K562 (cell line): ENCODE measurements at regions of chr13 and their contacts with region 1.

Region 1: GRCh38 chr13:42110410-42111155 is 62.1 kb downstream of the DGKH start:
- DNase-seq: peak; percentile 24 to 59 (median 25)
- ATAC-seq: peak; percentile 67
- H3K4me3 ChIP-seq: no peak overlapping the region
- H3K27ac ChIP-seq: no peak overlapping the region
- H3K4me1 ChIP-seq: peaks cover 0 to 10% of the 10 kb centered on the region in 2 experiments; a peak in 1 of 5 replicates
- H3K27me3 ChIP-seq: no peaks in the 10 kb centered on the region
- CTCF ChIP-seq: peak; percentile 41 to 71 (median 50); a peak in 5 of 6 replicates
- EP300 ChIP-seq: no peak
- POLR2A ChIP-seq: no peak
- RAD21 ChIP-seq: peak; percentile 67 to 82

Region 2: GRCh38 chr13:41178040-41178439 is 932.5 kb before region 1 on chr13:
- CTCF ChIA-PET with region 1: no interaction called
- POLR2A ChIA-PET with region 1: no interaction called
- in situ Hi-C with region 1: no loop called
- intact Hi-C with region 1: no loop called
- DNase-seq: no peak
- ATAC-seq: no peak
- H3K4me3 ChIP-seq: no peak overlapping the region
- H3K27ac ChIP-seq: no peak overlapping the region
- H3K4me1 ChIP-seq: peaks cover 0 to 4% of the 10 kb centered on the region in 2 experiments; a peak in 1 of 5 replicates
- H3K27me3 ChIP-seq: no peaks in the 10 kb centered on the region
- CTCF ChIP-seq: no peak
- EP300 ChIP-seq: no peak
- POLR2A ChIP-seq: no peak
- RAD21 ChIP-seq: no peak

Region 3: GRCh38 chr13:41383386-41383785 is 727.2 kb before region 1 on chr13:
- CTCF ChIA-PET with region 1: no interaction called
- POLR2A ChIA-PET with region 1: no interaction called
- in situ Hi-C with region 1: no loop called
- intact Hi-C with region 1: no loop called
- DNase-seq: no peak
- ATAC-seq: no peak
- H3K4me3 ChIP-seq: no peak overlapping the region
- H3K27ac ChIP-seq: no peak overlapping the region
- H3K4me1 ChIP-seq: no peaks in the 10 kb centered on the region
- H3K27me3 ChIP-seq: peaks cover 0 to 3% of the 10 kb centered on the region in 2 experiments; a peak in 1 of 5 replicates
- CTCF ChIP-seq: no peak
- EP300 ChIP-seq: no peak
- POLR2A ChIP-seq: no peak
- RAD21 ChIP-seq: no peak

Region 4: DNA sequence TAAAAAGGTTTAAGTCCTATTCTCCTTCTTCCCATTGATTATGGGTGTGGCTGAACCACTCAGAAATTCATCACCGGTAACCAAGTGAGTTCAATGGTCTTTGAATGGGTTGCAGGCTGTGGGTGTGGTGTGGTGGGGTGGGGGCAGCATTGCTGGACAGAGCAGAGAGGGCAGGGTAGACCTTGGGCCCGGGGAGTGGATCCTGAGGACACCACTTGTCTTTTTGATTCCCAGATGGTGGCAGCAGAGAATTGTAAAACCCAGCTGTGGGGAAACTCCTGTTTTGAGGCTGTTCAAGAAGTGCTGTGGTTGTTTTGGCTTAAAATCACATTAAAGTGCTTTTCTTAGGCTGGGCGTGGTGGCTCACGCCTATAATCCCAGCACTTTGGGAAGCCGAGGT is 699.1 kb before region 1 on chr13:
- CTCF ChIA-PET with region 1: interaction called, 4 read pairs
- POLR2A ChIA-PET with region 1: no interaction called
- in situ Hi-C with region 1: loop called (anchors 25 kb)
- intact Hi-C with region 1: no loop called
- DNase-seq: peak in 2 of 4 experiments; percentile 20 to 37
- ATAC-seq: peak; percentile 85
- H3K4me3 ChIP-seq: no peak overlapping the region
- H3K27ac ChIP-seq: no peak overlapping the region
- H3K4me1 ChIP-seq: no peaks in the 10 kb centered on the region; a peak in 1 of 5 replicates
- H3K27me3 ChIP-seq: no peaks in the 10 kb centered on the region
- CTCF ChIP-seq: peak; percentile 31 to 54 (median 47); a peak in 4 of 6 replicates
- EP300 ChIP-seq: no peak
- POLR2A ChIP-seq: no peak
- RAD21 ChIP-seq: peak; percentile 53 to 77

Region 5: DNA sequence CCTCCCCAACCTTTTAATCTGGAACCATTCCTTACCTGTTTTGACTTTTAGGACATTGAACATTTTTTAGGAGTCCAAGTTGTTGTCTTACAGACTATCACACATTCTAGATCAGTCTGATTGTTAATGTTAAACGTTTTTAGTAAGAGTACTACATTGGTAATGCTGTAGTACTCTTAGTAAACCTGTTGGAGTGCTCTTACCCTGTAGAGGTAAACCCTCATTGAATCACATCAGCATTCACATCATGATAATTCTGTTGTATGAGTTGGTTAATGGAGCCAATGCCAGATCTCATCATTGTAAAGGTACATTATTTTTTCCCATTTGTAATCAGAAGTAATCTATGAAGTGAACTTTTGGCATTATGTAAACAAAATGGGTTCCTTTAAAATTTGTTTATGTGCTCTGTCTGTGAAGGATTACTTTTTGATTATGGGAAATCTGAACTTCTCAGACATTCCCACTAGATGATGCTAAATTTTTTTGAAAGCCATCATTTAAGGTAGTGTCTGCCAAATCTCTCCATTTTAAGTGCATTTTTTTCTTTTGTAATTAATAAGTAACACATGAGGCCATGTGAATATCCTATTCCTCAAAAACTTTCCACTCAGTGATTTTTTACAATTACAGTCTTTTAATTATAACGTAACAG is 204.9 kb before region 1 on chr13:
- CTCF ChIA-PET with region 1: interaction called, 6 read pairs
- POLR2A ChIA-PET with region 1: no interaction called
- in situ Hi-C with region 1: no loop called
- intact Hi-C with region 1: loop called (anchors 5 kb)
- DNase-seq: peak in 3 of 4 experiments; percentile 19 to 32 (median 31)
- ATAC-seq: peak; percentile 90
- H3K4me3 ChIP-seq: no peak overlapping the region
- H3K27ac ChIP-seq: no peak overlapping the region
- H3K4me1 ChIP-seq: no peaks in the 10 kb centered on the region
- H3K27me3 ChIP-seq: no peaks in the 10 kb centered on the region
- CTCF ChIP-seq: peak; percentile 40 to 58 (median 42); a peak in 4 of 6 replicates
- EP300 ChIP-seq: no peak
- POLR2A ChIP-seq: no peak
- RAD21 ChIP-seq: peak; percentile 45 to 74

Region 6: GRCh38 chr13:42064259-42064658 is 46.3 kb before region 1 on chr13:
- CTCF ChIA-PET with region 1: no interaction called
- POLR2A ChIA-PET with region 1: no interaction called
- in situ Hi-C with region 1: no loop called
- intact Hi-C with region 1: no loop called
- DNase-seq: no peak
- ATAC-seq: no peak
- H3K4me3 ChIP-seq: no peak overlapping the region
- H3K27ac ChIP-seq: no peak overlapping the region
- H3K4me1 ChIP-seq: 0 out of 5 replicates have a peak, but pooled peaks cover 0 to 5% of the 10 kb centered on the region in 2 experiments
- H3K27me3 ChIP-seq: no peaks in the 10 kb centered on the region
- CTCF ChIP-seq: no peak
- EP300 ChIP-seq: no peak
- POLR2A ChIP-seq: no peak
- RAD21 ChIP-seq: no peak

Region 7: GRCh38 chr13:42215578-42216421 is 105.2 kb after region 1 on chr13:
- CTCF ChIA-PET with region 1: interaction called, 4 read pairs
- POLR2A ChIA-PET with region 1: no interaction called
- in situ Hi-C with region 1: no loop called
- intact Hi-C with region 1: loop called (anchors 2 kb)
- DNase-seq: peak; percentile 4 to 45 (median 10)
- ATAC-seq: peak; percentile 92
- H3K4me3 ChIP-seq: no peak overlapping the region
- H3K27ac ChIP-seq: no peak overlapping the region
- H3K4me1 ChIP-seq: no peaks in the 10 kb centered on the region; a peak in 2 of 5 replicates
- H3K27me3 ChIP-seq: no peaks in the 10 kb centered on the region
- CTCF ChIP-seq: peak; percentile 52 to 67 (median 66); a peak in 5 of 6 replicates
- EP300 ChIP-seq: no peak
- POLR2A ChIP-seq: no peak
- RAD21 ChIP-seq: peak; percentile 64 to 76

Region 8: GRCh38 chr13:42649831-42650230 is 539.2 kb after region 1 on chr13:
- CTCF ChIA-PET with region 1: no interaction called
- POLR2A ChIA-PET with region 1: no interaction called
- in situ Hi-C with region 1: no loop called
- intact Hi-C with region 1: no loop called
- DNase-seq: no peak
- ATAC-seq: no peak
- H3K4me3 ChIP-seq: no peak overlapping the region
- H3K27ac ChIP-seq: no peak overlapping the region
- H3K4me1 ChIP-seq: no peaks in the 10 kb centered on the region
- H3K27me3 ChIP-seq: no peaks in the 10 kb centered on the region; a peak in 1 of 5 replicates
- CTCF ChIP-seq: no peak
- EP300 ChIP-seq: no peak
- POLR2A ChIP-seq: no peak
- RAD21 ChIP-seq: no peak